ENCODE measurements at regions of chr17 and their contacts with region 1.

Region 1: DNA sequence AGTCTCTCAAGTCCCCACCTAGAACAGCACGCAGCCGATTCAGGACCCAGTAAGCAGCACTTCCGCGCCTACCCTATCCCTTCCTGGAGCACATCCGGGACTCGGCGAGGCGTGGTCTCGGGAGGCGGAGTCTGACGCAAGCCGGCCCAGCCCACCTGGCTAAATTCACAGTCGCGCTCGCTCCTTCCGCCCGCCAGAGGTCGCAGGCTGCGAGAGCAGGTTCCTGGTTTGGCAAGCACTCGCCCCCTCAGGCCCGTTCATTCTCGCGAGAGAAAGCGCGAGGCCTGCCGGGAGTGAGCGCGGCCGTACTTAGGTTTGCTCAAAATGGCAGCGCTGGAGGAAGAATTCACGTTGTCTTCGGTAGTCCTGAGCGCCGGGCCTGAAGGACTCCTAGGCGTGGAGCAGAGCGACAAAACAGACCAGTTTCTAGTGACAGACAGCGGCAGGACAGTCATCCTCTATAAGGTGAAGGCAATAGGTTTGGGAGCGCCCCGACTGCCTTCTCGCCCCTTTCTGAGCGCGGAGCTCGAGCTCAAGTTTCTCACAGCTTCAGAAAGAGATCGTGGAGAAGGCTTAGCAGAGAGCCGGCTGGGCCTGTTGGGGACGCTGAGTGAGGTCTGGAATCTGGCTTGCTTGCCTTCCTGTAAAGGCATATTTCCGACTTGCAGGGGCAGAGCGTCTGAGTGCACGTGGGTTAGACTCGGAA is at the start of gene NOL11:
- DNase-seq: peak; percentile 99
- H3K4me3 ChIP-seq: peak within 1 kb of the TSS; percentile 69 to 81 (median 80)
- H3K27ac ChIP-seq: peak within 1 kb of the TSS; percentile 82 to 91 (median 88)
- H3K4me1 ChIP-seq: peaks cover 0 to 22% (median 17%) of the 10 kb centered on the region in 4 donors
- H3K27me3 ChIP-seq: no peaks in the 10 kb centered on the region
- CTCF ChIP-seq: peak; percentile 73 to 93 (median 86)
- EP300 ChIP-seq: peak in 1 of 4 donors; percentile 73
- POLR2A ChIP-seq: peak; percentile 56 to 76
- total RNA-seq, gene NOL11: 22.7 to 34.2 (median 26.0) TPM

Region 2: DNA sequence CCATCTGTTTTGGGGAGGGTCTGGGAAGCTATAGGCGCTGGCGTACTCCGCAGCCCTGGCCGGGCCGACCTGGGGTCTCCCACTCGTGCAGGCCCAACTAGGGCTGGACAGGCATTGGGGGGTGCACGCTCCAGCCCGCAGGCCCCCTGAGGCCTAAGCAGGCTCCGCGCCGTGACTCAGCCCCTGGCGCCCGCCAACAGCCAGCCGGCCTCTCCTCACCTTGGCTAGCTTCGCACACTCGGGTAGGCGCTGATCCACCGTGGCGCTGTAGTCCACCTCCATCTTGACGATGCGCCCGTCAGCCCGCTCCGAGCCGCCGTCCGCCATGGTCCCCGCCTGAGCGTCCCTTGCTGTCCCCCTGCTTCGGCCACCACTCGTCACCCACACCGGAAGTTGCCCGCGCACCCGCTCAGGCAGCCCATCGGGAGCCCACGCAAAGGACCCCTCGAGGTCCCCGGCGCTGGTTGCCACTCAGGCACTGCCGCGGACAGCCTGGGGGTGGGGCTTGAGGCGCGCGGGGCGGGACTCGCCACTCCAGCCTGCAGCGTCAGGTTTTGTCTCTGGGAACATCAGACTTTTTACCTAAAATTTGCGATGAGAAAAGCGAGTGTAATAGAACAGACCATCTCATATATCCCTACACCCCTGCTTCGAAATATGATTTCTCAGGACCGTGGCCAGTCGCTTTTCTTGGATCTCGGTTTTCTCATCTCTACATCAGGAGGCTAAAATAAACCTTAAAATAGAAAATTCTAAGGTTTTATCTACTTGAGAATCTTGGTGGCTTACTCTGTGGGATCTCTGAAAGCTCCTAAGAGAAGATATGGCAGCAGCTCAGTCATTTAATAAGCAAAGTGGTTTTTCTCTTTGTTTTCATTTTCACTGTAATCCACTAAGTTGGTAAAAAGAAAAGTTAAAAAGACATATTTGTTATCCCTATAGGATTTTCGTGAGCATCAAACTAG is 351.3 kb before region 1 on chr17 and contains the start of gene PSMD12:
- intact Hi-C with region 1: loop called (anchors 10 kb)
- DNase-seq: peak; percentile 96
- H3K4me3 ChIP-seq: peak within 1 kb of the TSS; percentile 64 to 94 (median 76)
- H3K27ac ChIP-seq: peak within 1 kb of the TSS; percentile 87 to 93 (median 92)
- H3K4me1 ChIP-seq: peaks cover 0 to 47% (median 32%) of the 10 kb centered on the region in 4 donors
- H3K27me3 ChIP-seq: no peaks in the 10 kb centered on the region
- CTCF ChIP-seq: no peak
- EP300 ChIP-seq: peak in 1 of 4 donors; percentile 40
- POLR2A ChIP-seq: peak; percentile 57 to 62
- total RNA-seq, gene PSMD12: 30.0 to 38.9 (median 33.0) TPM

Region 3: DNA sequence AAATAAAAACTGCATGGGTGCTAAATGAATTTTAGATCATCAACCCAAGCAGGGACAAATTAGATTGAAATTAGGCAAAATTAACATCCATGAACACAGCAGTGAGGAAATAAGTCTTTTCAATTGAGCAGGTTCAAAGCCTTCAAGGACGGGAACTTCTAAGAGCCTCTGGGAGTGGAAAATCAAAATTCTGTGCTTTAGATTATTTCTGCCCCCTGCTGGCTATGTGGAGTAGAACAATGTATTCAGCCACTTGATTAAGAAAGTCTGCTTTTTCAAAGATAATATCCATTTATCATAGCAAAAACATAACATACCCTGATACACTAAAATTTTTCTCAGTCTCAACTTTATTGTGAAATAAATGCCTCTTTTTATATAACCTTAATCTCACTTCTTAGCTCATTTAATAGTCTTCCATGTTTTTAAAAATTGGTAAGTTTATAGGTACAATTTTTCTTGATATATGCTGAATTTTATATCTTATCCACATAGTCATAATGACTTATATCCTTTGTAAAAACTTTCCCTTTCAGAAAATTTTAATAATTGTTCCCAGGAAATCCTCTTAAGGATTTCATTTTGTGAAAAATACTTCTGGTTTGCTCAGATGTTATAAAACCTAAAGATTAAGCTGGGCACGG is 28.1 kb before region 1 on chr17:
- intact Hi-C with region 1: loop called (anchors 2 kb)
- DNase-seq: no peak
- H3K4me3 ChIP-seq: no peak overlapping the region
- H3K27ac ChIP-seq: no peak overlapping the region
- H3K4me1 ChIP-seq: no peaks in the 10 kb centered on the region
- H3K27me3 ChIP-seq: no peaks in the 10 kb centered on the region
- CTCF ChIP-seq: peak; percentile 42 to 78 (median 70)
- EP300 ChIP-seq: no peak
- POLR2A ChIP-seq: no peak

Region 4: GRCh38 chr17:67773246-67773645 is 55.5 kb after region 1 on chr17:
- intact Hi-C with region 1: no loop called
- DNase-seq: no peak
- H3K4me3 ChIP-seq: no peak overlapping the region
- H3K27ac ChIP-seq: no peak overlapping the region
- H3K4me1 ChIP-seq: no peaks in the 10 kb centered on the region
- H3K27me3 ChIP-seq: no peaks in the 10 kb centered on the region
- CTCF ChIP-seq: no peak
- EP300 ChIP-seq: no peak
- POLR2A ChIP-seq: no peak

Region 5: DNA sequence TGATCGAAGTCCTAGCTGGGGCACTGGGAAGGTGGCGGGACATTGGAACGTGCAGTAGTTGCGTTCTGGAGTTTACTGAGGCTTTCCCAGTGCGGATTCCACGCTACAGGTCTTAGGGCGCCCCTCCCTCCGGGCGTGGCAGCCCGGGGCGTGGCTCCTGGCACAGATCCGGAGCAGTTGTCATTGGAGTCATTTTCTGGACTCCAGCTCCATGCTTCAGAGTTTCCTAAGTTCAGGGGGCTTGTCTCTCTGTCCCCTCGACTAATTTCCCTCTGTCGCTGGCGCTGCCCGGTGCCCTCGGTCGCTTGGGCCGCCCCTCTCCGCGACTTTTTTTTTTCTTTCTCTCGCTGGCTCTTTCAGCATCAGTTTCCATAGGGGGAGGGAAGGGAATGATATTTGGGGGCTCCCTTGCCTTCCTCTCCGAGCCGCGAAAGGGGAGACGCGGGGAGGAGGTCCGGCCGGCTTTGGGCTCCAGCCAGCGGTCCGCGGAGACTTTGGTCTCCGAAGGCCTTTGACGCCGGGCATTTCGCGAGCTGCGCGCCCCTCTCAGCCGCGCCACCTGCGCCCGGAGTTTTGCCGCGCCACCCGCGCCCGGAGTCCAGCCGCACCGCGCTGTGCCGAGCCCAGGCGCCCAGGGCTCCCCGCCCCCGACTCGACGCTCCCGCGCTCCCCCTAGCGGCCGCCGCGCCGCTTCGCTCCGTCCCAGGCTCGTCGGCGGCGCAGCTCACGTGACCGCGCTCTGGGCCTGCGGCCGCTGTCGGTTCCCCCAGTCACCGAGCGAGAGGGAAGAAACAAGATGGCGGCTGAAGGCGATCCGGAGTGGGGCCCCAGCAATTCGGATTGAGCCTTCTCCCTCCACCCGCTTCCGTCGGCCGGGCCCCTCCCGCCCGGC is 107.2 kb after region 1 on chr17 and contains the start of gene BPTF:
- intact Hi-C with region 1: loop called (anchors 1 kb)
- DNase-seq: peak; percentile 95
- H3K4me3 ChIP-seq: peak within 1 kb of the TSS; percentile 76 to 88 (median 82)
- H3K27ac ChIP-seq: peak within 1 kb of the TSS; percentile 92 to 98 (median 96)
- H3K4me1 ChIP-seq: peaks cover 0 to 41% (median 34%) of the 10 kb centered on the region in 4 donors
- H3K27me3 ChIP-seq: no peaks in the 10 kb centered on the region
- CTCF ChIP-seq: peak; percentile 36 to 95 (median 48)
- EP300 ChIP-seq: no peak
- POLR2A ChIP-seq: no peak
- total RNA-seq, gene BPTF: 64.6 to 91.1 (median 82.8) TPM

Region 6: GRCh38 chr17:67959288-67959900 is 241.6 kb after region 1 on chr17:
- intact Hi-C with region 1: no loop called
- DNase-seq: no peak
- H3K4me3 ChIP-seq: no peak overlapping the region
- H3K27ac ChIP-seq: no peak overlapping the region
- H3K4me1 ChIP-seq: no peaks in the 10 kb centered on the region
- H3K27me3 ChIP-seq: no peaks in the 10 kb centered on the region
- CTCF ChIP-seq: no peak
- EP300 ChIP-seq: no peak
- POLR2A ChIP-seq: no peak